Panc1 (cell line): ENCODE measurements at regions of chr5 and their contacts with region 1.

Region 1: GRCh38 chr5:176869501-176870109 is 29.5 kb downstream of the HK3 start:
- DNase-seq: no peak
- ATAC-seq: peak; percentile 51
- H3K4me3 ChIP-seq: no peak overlapping the region
- H3K27ac ChIP-seq: no peak overlapping the region
- H3K4me1 ChIP-seq: no peaks in the 10 kb centered on the region
- H3K27me3 ChIP-seq: no peaks in the 10 kb centered on the region
- CTCF ChIP-seq: no peak

Region 2: GRCh38 chr5:176901260-176902101 is 31.9 kb after region 1 on chr5:
- CTCF ChIA-PET with region 1: no interaction called
- POLR2A ChIA-PET with region 1: interaction called, 16 read pairs
- in situ Hi-C with region 1: no loop called
- intact Hi-C with region 1: no loop called
- DNase-seq: no peak
- ATAC-seq: no peak
- H3K4me3 ChIP-seq: no peak overlapping the region
- H3K27ac ChIP-seq: no peak overlapping the region
- H3K4me1 ChIP-seq: no peaks in the 10 kb centered on the region
- H3K27me3 ChIP-seq: no peaks in the 10 kb centered on the region
- CTCF ChIP-seq: no peak